ENCODE measurements at regions of chr3 and their contacts with region 1.

Region 1: GRCh38 chr3:177359593-177360357 is 162.5 kb upstream of the TBL1XR1 start:
- DNase-seq: peak; percentile 98
- ATAC-seq: peak; percentile 92

Region 2: GRCh38 chr3:177126015-177126773 is 233.6 kb before region 1 on chr3:
- intact Hi-C with region 1: loop called (anchors 5 kb)
- DNase-seq: no peak
- ATAC-seq: peak; percentile 81

Region 3: DNA sequence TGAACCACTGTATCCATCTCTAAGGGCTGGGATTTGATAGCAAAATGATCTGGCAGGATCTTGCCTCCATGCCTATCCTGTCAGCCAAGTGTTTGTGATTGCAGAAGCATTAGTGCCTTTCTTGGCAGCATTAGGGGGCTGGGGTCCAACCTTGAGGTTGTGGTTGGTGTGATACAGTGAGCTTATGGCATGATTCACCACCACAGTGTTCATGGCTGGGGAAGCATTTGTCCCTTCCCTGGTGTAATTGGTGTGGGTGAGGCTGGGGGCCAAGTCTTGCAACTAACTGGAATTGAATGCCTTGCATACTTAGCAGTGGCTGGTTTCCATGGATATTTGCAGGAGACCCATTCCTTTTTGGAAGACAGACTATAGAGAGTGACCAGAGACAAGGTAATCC is 108.6 kb after region 1 on chr3:
- intact Hi-C with region 1: loop called (anchors 10 kb)
- DNase-seq: no peak
- ATAC-seq: peak; percentile 25

Region 4: GRCh38 chr3:177724020-177724638 is 364.4 kb after region 1 on chr3:
- intact Hi-C with region 1: loop called (anchors 10 kb)
- DNase-seq: peak; percentile 82
- ATAC-seq: peak; percentile 96

Region 5: DNA sequence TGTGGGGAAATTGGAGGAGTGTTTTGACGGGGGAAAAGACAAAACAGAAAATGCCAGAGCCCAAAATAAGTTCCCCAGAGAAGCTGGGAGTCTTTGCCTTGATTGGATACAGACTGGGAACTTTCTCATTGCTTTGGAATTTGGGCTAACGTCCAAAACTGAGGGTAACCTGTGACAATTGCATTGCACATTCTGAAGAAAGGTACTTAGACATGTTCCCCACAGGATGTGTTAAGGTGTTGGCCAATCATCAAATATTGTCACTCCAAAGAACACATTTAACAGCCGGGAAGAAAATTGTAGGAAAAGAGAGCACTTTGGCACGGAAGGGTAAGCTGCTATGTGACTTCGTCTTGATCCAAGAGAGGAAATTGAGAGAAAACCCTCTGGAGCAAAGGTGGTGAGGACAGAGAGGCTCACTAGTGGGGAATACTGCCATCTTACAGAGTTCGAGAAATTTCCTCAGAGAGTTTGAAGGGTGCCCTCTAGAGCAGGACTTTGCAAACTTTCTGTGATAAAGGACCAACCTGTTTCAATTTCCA is 457.0 kb after region 1 on chr3:
- intact Hi-C with region 1: loop called (anchors 10 kb)
- DNase-seq: no peak
- ATAC-seq: peak; percentile 60

Region 6: DNA sequence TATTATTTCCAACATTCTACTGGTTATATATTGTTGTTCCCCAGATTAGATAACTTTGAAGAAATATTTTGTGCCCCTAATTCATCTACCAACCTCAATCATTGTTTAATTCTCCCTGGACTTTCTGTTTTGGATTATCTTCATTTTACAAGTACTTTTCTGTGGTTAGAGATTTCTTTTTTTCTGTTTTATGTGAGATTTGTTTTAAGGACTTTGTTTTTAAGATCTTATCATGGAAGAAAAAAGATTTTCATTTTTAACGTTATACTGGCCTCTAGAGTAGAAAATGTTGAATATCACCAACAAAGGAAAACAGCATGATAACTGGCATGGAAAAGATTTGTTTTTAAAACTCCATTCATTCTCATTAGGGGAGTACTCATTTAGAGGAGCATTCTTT is 965.6 kb after region 1 on chr3:
- intact Hi-C with region 1: loop called (anchors 2 kb)
- DNase-seq: no peak
- ATAC-seq: no peak